Common myeloid progenitor, CD34-positive (primary cell): ENCODE measurements at regions of chr3 and their contacts with region 1.

Region 1: GRCh38 chr3:160163229-160163878 is 61.9 kb upstream of the C3orf80 start:
- DNase-seq: peak; percentile 56 to 62 (median 60)
- H3K4me3 ChIP-seq: no peak overlapping the region
- H3K27ac ChIP-seq: no peak overlapping the region
- H3K4me1 ChIP-seq: peaks cover 0 to 6% (median 2%) of the 10 kb centered on the region in 4 experiments
- H3K27me3 ChIP-seq: no peaks in the 10 kb centered on the region

Region 2: GRCh38 chr3:160069986-160070385 is 93.4 kb before region 1 on chr3:
- CTCF ChIA-PET with region 1: no interaction called
- POLR2A ChIA-PET with region 1: no interaction called
- DNase-seq: peak; percentile 14 to 79 (median 73)
- H3K4me3 ChIP-seq: no peak overlapping the region
- H3K27ac ChIP-seq: no peak overlapping the region
- H3K4me1 ChIP-seq: peaks cover 0 to 8% (median 2%) of the 10 kb centered on the region in 4 experiments
- H3K27me3 ChIP-seq: no peaks in the 10 kb centered on the region

Region 3: DNA sequence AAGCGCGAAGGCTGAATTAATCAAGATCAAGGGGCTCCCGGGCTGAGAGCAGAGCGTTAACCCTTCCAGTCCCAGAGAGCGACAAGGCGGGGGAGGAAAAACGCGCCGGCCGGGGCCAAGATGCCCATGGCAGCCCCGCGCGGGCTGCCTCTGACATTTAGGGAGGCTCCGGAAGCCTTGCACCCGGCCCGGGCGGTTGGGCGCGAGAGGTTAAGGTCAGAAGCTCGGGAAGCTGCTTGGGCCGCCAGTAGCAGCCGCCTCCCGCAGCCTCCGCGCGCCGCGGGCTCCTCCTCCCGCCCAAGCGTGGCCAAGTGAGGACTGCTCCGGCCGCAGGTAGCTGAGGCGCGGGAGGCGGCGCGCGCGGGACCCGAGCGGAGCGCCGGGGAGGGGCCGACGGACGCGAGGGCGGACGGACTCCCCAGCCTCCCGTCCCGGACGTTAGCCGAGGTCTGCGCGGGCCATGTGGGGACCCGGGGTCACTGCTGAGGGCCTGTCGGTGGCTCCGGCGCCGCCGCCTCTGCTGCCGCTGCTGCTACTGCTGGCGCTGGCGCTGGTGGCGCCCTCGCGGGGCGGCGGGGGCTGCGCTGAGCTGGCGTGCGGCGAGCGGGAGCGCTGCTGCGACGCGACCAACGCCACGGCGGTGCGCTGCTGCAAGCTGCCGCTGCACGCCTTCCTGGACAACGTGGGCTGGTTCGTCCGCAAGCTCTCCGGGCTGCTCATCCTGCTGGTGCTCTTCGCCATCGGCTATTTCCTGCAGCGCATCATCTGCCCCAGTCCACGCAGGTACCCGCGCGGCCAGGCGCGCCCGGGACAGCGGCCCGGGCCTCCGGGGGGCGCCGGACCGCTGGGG is 62.0 kb after region 1 on chr3 and contains the start of gene C3orf80:
- CTCF ChIA-PET with region 1: interaction called, 26 read pairs
- POLR2A ChIA-PET with region 1: interaction called, 3 read pairs
- DNase-seq: peak; percentile 75 to 92 (median 92)
- H3K4me3 ChIP-seq: peak within 1 kb of the TSS; percentile 46 to 92 (median 83)
- H3K27ac ChIP-seq: peak within 1 kb of the TSS; percentile 82 to 91
- H3K4me1 ChIP-seq: peaks cover 5 to 72% (median 38%) of the 10 kb centered on the region in 4 experiments
- H3K27me3 ChIP-seq: no peaks in the 10 kb centered on the region

Region 4: DNA sequence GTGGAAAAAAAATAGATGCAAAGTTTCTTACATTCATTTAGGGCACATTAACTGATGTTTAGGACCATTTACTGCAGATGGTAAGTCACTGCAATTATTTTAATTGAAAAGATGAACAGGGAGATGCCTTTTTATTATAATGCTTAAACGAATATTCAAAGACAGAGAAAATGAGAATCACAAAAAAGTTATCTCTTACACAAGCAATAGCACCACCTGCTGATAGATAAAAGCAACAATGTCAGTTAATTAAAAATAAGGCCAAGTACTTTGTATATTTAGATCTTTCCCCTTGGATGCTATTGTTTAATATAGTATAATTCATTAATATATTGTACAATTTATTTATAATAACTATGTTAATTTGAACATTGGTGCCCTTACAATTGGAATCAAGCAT is 179.8 kb after region 1 on chr3:
- CTCF ChIA-PET with region 1: interaction called, 77 read pairs
- POLR2A ChIA-PET with region 1: no interaction called
- DNase-seq: peak; percentile 39 to 67 (median 64)
- H3K4me3 ChIP-seq: no peak overlapping the region
- H3K27ac ChIP-seq: no peak overlapping the region
- H3K4me1 ChIP-seq: peaks cover 0 to 2% (median 0%) of the 10 kb centered on the region in 4 experiments
- H3K27me3 ChIP-seq: no peaks in the 10 kb centered on the region